Head of caudate nucleus (tissue), 42 donors: ENCODE measurements at regions of chr16 and their contacts with region 1.

Region 1: GRCh38 chr16:11734025-11734652 is 8.5 kb downstream of the TXNDC11 start:
- DNase-seq: peak in 3 of 42 donors; percentile 15 to 25 (median 17)

Region 2: GRCh38 chr16:11669380-11670146 is 64.6 kb before region 1 on chr16:
- intact Hi-C with region 1: loop called (anchors 10 kb)
- DNase-seq: peak in 29 of 42 donors; percentile 27 to 80 (median 52)

Region 3: DNA sequence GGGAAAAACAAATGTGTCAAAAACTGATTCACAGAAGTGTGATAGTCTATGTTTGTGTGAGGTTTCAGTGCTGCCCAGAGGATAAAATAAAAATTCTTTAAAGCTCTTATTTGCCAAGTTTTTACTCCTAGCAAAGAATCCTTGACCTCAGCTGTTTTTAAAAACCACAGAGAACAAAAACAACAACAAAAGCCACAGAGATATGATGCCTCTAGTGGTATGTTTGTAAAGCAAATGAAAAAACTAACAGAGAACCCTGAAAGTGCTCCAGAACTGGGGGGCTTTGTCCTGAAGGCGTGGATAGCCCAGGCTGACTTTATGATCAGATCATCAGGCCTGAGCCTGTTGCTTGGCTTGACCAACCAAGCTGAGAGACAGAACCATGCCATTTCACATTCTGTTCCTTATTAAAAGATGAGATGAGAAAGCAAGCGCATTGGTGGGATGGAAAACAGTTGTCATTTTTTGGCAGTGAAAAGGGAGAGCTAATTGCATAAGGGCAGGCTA is 658.5 kb after region 1 on chr16:
- intact Hi-C with region 1: no loop called
- DNase-seq: no peak